ENCODE measurements at regions of chr5 and their contacts with region 1.

Region 1: DNA sequence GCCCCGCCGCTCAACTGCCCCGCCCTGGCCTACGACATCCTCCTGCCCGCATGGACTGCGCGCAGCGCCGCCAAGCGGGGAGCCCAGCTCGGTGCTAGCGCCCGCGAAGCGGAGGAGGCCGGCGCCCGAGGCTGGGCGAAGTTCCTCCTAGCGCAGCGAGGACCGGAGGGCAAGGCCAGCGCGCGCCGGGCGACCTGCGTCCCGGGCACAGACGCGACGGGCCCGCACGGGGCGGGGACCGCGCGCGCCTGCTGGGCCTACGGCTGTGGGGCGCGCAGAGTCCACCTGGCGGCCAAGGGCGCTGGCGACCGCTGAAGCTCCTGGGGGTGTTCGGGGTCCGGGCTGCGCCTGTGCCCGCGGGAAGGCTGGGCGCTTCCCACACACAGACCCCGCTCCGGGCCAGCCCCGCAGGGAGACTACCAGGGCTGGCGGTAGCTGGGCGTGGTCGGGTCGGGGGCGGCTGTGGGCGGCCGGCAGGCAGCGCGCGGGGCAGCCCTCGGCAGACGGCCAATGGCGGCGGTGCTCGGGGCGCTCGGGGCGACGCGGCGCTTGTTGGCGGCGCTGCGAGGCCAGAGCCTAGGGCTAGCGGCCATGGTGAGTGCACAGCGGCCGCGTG is at the start of gene PCBD2:
- DNase-seq: peak; percentile 83
- ATAC-seq: peak; percentile 83
- H3K4me3 ChIP-seq: peak within 1 kb of the TSS; percentile 66 to 86
- H3K27ac ChIP-seq: peak within 1 kb of the TSS; percentile 99
- H3K4me1 ChIP-seq: peaks cover 16 to 33% of the 10 kb centered on the region in 2 experiments
- H3K27me3 ChIP-seq: no peaks in the 10 kb centered on the region
- CTCF ChIP-seq: peak in 2 of 3 experiments; percentile 76 to 86; a peak in 4 of 6 replicates
- POLR2A ChIP-seq: peak; percentile 53
- RAD21 ChIP-seq: no peak
- total RNA-seq, gene PCBD2: 10.9 TPM

Region 2: DNA sequence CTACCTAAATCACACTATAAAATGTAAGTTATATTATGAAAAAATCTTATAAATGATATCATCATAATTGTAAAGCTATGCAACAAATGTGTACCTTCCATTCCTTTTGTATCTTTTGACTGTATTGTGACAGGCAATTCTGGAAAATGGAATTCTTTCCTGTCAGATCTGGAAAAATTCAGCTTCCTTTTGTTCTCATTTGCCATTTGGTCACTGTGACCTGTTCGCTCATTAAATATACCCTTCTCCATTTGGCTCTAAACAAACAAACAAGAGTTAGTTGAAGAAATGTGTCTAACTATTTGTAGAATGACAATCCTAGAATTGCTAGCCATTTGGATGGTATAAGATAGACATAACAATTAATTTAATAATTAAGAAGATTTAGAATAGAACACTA is 600.4 kb before region 1 on chr5:
- CTCF ChIA-PET with region 1: no interaction called
- POLR2A ChIA-PET with region 1: no interaction called
- RAD21 ChIA-PET with region 1: no interaction called
- intact Hi-C with region 1: loop called (anchors 10 kb)
- DNase-seq: no peak
- ATAC-seq: no peak
- H3K4me3 ChIP-seq: no peak overlapping the region
- H3K27ac ChIP-seq: no peak overlapping the region
- H3K4me1 ChIP-seq: no peaks in the 10 kb centered on the region
- H3K27me3 ChIP-seq: no peaks in the 10 kb centered on the region
- CTCF ChIP-seq: no peak
- POLR2A ChIP-seq: no peak
- RAD21 ChIP-seq: no peak

Region 3: GRCh38 chr5:134738133-134738962 is 166.4 kb before region 1 on chr5 and contains the start of gene CAMLG:
- CTCF ChIA-PET with region 1: interaction called, 4 read pairs
- POLR2A ChIA-PET with region 1: interaction called, 6 read pairs
- RAD21 ChIA-PET with region 1: interaction called in 1 of 2 experiments, 3 read pairs
- intact Hi-C with region 1: loop called (anchors 1 kb)
- DNase-seq: peak; percentile 96
- ATAC-seq: peak; percentile 91
- H3K4me3 ChIP-seq: peak within 1 kb of the TSS; percentile 66 to 77
- H3K27ac ChIP-seq: peak within 1 kb of the TSS; percentile 70
- H3K4me1 ChIP-seq: peaks cover 9 to 24% of the 10 kb centered on the region in 2 experiments
- H3K27me3 ChIP-seq: no peaks in the 10 kb centered on the region
- CTCF ChIP-seq: peak; percentile 49 to 79 (median 66)
- POLR2A ChIP-seq: peak; percentile 65
- RAD21 ChIP-seq: peak; percentile 65
- total RNA-seq, gene CAMLG: 29.3 TPM

Region 4: DNA sequence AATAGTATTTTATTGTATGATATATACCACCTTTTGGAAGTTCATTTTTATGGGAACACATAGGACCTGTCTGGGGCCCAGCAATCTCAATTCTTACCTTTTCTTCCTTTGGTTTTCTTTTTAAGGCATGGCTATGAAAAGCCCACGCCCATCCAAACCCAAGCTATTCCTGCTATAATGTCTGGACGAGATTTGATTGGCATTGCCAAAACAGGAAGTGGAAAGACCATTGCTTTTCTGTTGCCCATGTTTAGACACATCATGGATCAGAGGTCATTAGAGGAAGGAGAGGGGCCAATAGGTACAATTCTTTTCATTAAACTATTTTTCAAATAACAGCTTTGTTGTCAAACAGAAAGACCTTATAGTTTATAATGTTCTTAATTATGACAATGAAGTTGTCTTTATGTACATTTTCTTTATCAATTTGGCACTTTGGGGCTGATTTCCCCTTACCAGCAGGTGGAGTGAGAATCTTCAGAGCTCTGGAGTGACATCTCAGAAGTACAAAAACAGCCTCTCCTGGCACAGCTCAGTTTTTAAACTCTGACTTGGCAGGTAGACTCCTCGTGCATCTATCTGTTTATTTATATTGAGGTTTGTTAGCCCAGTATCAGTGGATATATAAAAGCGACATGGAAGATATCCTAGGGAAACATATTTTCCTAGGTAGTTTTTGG is 120.4 kb before region 1 on chr5:
- CTCF ChIA-PET with region 1: interaction called, 6 read pairs
- POLR2A ChIA-PET with region 1: no interaction called
- RAD21 ChIA-PET with region 1: no interaction called
- intact Hi-C with region 1: loop called (anchors 1 kb)
- DNase-seq: no peak
- ATAC-seq: no peak
- H3K4me3 ChIP-seq: no peak overlapping the region
- H3K27ac ChIP-seq: no peak overlapping the region
- H3K4me1 ChIP-seq: no peaks in the 10 kb centered on the region
- H3K27me3 ChIP-seq: no peaks in the 10 kb centered on the region
- CTCF ChIP-seq: peak in 2 of 3 experiments; percentile 28 to 33; a peak in 2 of 6 replicates
- POLR2A ChIP-seq: no peak
- RAD21 ChIP-seq: peak; percentile 24; the same call in 1 of the 2 replicates

Region 5: GRCh38 chr5:134845852-134846640 is 58.7 kb before region 1 on chr5 and contains the start of gene C5orf24:
- CTCF ChIA-PET with region 1: interaction called, 7 read pairs
- POLR2A ChIA-PET with region 1: interaction called, 10 read pairs
- RAD21 ChIA-PET with region 1: no interaction called
- intact Hi-C with region 1: loop called (anchors 2 kb)
- DNase-seq: peak; percentile 89
- ATAC-seq: peak; percentile 89
- H3K4me3 ChIP-seq: peak within 1 kb of the TSS; percentile 76 to 96
- H3K27ac ChIP-seq: peak within 1 kb of the TSS; percentile 93
- H3K4me1 ChIP-seq: peaks cover 37 to 56% of the 10 kb centered on the region in 2 experiments
- H3K27me3 ChIP-seq: no peaks in the 10 kb centered on the region
- CTCF ChIP-seq: no peak
- POLR2A ChIP-seq: peak; percentile 96
- RAD21 ChIP-seq: no peak
- total RNA-seq, gene C5orf24: 46.9 TPM

Region 6: DNA sequence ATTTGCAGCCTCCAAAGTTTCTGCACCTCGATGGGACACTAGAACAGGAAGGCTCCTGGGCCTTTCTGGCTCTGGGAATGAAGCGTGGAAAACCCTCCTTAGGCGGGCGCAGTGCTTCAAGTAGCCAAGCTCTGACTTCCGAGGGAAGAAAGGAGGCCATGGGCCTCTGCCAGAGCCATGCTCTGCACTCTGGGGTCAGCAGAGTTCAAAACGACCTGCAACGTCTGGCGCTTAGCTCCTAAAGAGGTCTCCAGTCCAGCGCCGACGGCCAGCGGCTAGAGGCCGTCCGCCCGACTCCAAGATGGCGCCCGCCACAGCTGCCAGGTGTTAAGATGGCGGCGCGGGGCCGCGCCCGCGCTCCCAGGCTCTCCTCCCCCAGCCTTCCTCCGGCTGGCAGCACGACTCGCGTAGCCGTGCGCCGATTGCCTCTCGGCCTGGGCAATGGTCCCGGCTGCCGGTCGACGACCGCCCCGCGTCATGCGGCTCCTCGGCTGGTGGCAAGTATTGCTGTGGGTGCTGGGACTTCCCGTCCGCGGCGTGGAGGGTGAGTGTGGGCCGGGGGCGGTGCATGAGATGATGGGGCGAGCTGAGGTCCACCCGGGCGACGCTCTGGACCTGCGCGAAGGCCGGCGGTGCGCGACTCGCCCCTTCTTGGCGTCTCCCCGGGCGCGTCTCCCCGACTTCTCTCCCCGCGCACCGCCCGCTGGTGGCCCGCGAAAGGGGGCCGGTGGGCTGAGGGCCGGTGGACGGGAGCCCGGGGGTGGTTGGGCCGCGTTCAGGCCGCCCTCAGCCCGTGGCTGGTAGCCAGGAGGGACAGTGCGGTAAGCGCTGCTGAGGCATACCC is 30.5 kb before region 1 on chr5 and contains the start of gene TXNDC15:
- CTCF ChIA-PET with region 1: interaction called, 9 read pairs
- POLR2A ChIA-PET with region 1: interaction called, 4 read pairs
- RAD21 ChIA-PET with region 1: interaction called in 1 of 2 experiments, 3 read pairs
- intact Hi-C with region 1: loop called (anchors 2 kb)
- DNase-seq: peak; percentile 56
- ATAC-seq: peak; percentile 87
- H3K4me3 ChIP-seq: peak within 1 kb of the TSS; percentile 72 to 83
- H3K27ac ChIP-seq: peak within 1 kb of the TSS; percentile 73
- H3K4me1 ChIP-seq: peaks cover 2 to 16% of the 10 kb centered on the region in 2 experiments; a peak in 3 of 4 replicates
- H3K27me3 ChIP-seq: no peaks in the 10 kb centered on the region
- CTCF ChIP-seq: no peak
- POLR2A ChIP-seq: peak; percentile 74
- RAD21 ChIP-seq: no peak
- total RNA-seq, gene TXNDC15: 17.8 TPM

Region 7: DNA sequence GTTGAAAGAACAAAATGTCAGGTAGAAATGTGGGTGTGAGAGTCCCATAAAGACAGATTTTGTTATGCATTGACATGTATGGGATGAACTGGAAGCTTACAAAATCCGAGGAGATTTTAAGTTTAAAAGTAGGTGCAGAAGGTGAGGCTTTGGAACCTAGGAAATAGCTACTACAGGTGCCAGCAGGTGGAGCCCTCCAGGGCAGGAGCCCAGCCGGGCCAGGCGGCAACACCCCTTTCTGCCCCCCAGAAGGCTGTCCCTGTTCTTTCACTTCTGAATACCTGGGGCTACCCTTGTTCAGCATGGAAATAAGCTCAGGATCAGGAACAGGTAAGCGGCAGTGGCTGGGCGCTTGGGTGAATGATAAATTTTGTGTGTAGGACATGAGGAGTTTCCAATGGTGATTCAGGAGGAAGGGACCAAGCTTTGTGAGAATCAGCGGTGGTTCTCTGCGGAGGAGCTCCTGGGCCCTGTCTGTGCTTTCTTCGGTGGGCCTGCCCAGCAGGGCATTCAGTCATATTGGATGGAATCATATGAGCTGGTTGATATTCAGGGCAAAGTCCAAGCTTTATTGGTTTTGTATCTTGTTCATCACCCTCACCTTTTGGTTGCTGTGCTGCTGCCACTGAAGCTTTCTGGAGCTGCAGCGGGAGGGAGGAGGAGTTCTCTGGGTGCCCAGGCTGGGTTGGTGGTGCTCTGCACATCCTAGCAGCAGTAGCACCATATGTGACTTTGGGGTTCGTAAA is 12.5 kb after region 1 on chr5:
- CTCF ChIA-PET with region 1: interaction called, 22 read pairs
- POLR2A ChIA-PET with region 1: interaction called, 5 read pairs
- RAD21 ChIA-PET with region 1: interaction called in 1 of 2 experiments, 3 read pairs
- intact Hi-C with region 1: no loop called
- DNase-seq: no peak
- ATAC-seq: peak; percentile 83
- H3K4me3 ChIP-seq: no peak overlapping the region
- H3K27ac ChIP-seq: no peak overlapping the region
- H3K4me1 ChIP-seq: no peaks in the 10 kb centered on the region
- H3K27me3 ChIP-seq: no peaks in the 10 kb centered on the region
- CTCF ChIP-seq: peak; percentile 61 to 66 (median 62)
- POLR2A ChIP-seq: no peak
- RAD21 ChIP-seq: peak; percentile 58

Region 8: GRCh38 chr5:135019314-135019713 is 114.6 kb after region 1 on chr5:
- CTCF ChIA-PET with region 1: no interaction called
- POLR2A ChIA-PET with region 1: no interaction called
- RAD21 ChIA-PET with region 1: no interaction called
- intact Hi-C with region 1: no loop called
- DNase-seq: no peak
- ATAC-seq: no peak
- H3K4me3 ChIP-seq: no peak overlapping the region
- H3K27ac ChIP-seq: no peak overlapping the region
- H3K4me1 ChIP-seq: no peaks in the 10 kb centered on the region
- H3K27me3 ChIP-seq: no peaks in the 10 kb centered on the region
- CTCF ChIP-seq: peak in 1 of 3 experiments; percentile 25; a peak in 1 of 6 replicates
- POLR2A ChIP-seq: no peak
- RAD21 ChIP-seq: peak; percentile 52